ENCODE measurements at regions of chr4 and their contacts with region 1.

Region 1: GRCh38 chr4:55312489-55313101 is 33.4 kb upstream of the SRD5A3 start:
- DNase-seq: peak in 2 of 10 donors; percentile 6 to 32
- H3K4me3 ChIP-seq: peak overlapping the region in 22 of 59 donors; percentile 0 to 46 (median 29)
- H3K27ac ChIP-seq: peak overlapping the region in 51 of 59 donors; percentile 4 to 85 (median 71)
- H3K27me3 ChIP-seq: no peaks in the 10 kb centered on the region
- CTCF ChIP-seq: peak in 54 of 56 donors; percentile 15 to 69 (median 51)

Region 2: GRCh38 chr4:55087009-55087929 is 225.3 kb before region 1 on chr4:
- intact Hi-C with region 1: loop called in 1 of 2 experiments (anchors 5 kb)
- DNase-seq: peak in 1 of 10 donors; percentile 10
- H3K4me3 ChIP-seq: peak overlapping the region in 55 of 59 donors; percentile 1 to 71 (median 35)
- H3K27ac ChIP-seq: peak overlapping the region in 58 of 59 donors; percentile 0 to 89 (median 76)
- H3K27me3 ChIP-seq: peaks cover 0 to 13% (median 0%) of the 10 kb centered on the region in 45 donors
- CTCF ChIP-seq: no peak

Measured in dorsolateral prefrontal cortex (tissue), 120 donors.